ENCODE measurements at regions of chr2 and their contacts with region 1.

Region 1: DNA sequence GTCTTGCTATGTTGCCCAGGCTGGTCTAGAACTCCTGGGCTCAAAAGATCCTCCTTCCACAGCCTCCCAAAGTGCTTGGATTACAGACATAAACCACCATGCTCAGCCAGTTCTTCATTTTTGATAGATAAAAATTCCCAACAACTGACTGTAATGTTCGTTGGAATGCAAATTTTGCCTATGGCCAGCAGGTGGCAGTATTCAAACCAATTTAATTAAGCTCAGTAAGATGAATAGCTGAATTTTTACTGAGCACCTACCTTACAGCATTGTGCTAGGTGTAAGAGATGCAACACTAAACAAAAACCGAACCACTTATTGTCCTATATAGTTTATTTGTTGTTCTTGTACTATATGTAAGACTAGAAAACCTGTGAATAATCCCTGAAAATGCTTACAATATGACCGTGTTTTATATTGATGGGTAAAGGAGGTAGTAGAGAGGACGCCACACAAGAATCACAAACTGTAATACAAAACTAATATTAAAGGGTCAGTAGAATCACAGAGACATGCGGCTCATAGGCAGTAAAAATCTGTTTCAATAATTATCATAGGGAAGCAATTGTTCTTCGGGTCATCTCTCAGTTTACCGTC is 8.2 kb upstream of the TMEM182 start:
- DNase-seq: no peak
- H3K4me3 ChIP-seq: no peak overlapping the region
- H3K27ac ChIP-seq: no peak overlapping the region
- H3K4me1 ChIP-seq: 0 out of 7 replicates have a peak, but pooled peaks cover 0 to 2% (median 0%) of the 10 kb centered on the region in 4 experiments
- H3K27me3 ChIP-seq: no peaks in the 10 kb centered on the region
- CTCF ChIP-seq: peak in 2 of 3 experiments; percentile 48 to 62; a peak in 3 of 4 replicates
- EP300 ChIP-seq: no peak
- POLR2A ChIP-seq: no peak
- RAD21 ChIP-seq: peak; percentile 35 to 41; a peak in 3 of 4 replicates

Region 2: DNA sequence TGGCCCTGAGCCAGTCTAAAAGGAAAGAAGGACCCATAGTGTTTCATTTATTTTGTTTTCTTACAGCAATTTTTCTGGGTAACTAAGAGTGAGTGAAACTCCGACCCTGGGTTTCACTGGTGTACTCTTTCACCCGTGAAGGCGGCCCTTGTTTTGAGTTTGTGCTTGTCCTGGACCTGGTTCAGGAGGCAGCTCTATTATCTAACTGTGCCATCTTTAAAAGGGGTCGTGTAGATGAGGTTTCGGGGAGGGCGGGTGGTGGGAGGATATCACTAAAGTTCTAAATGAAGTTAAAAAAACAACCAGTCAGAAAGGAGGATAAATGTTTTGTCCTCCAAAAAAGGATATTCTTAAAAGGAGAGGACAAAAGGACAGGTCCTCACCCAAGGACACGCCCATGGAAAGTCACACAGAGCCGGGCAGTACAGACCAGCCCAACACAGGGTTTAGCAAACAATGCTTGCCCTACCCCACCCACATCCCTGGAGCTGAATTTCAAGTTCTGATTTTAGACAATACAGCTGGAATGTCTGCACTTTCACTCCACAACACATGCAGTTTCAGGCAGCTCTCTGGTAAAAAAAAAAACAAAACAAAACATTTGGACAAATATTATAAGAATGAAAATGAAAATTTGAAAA is 212.9 kb before region 1 on chr2:
- CTCF ChIA-PET with region 1: no interaction called
- POLR2A ChIA-PET with region 1: no interaction called
- DNase-seq: no peak
- H3K4me3 ChIP-seq: no peak overlapping the region
- H3K27ac ChIP-seq: no peak overlapping the region
- H3K4me1 ChIP-seq: no peaks in the 10 kb centered on the region
- H3K27me3 ChIP-seq: no peaks in the 10 kb centered on the region
- CTCF ChIP-seq: no peak
- EP300 ChIP-seq: no peak
- POLR2A ChIP-seq: no peak
- RAD21 ChIP-seq: no peak

Region 3: DNA sequence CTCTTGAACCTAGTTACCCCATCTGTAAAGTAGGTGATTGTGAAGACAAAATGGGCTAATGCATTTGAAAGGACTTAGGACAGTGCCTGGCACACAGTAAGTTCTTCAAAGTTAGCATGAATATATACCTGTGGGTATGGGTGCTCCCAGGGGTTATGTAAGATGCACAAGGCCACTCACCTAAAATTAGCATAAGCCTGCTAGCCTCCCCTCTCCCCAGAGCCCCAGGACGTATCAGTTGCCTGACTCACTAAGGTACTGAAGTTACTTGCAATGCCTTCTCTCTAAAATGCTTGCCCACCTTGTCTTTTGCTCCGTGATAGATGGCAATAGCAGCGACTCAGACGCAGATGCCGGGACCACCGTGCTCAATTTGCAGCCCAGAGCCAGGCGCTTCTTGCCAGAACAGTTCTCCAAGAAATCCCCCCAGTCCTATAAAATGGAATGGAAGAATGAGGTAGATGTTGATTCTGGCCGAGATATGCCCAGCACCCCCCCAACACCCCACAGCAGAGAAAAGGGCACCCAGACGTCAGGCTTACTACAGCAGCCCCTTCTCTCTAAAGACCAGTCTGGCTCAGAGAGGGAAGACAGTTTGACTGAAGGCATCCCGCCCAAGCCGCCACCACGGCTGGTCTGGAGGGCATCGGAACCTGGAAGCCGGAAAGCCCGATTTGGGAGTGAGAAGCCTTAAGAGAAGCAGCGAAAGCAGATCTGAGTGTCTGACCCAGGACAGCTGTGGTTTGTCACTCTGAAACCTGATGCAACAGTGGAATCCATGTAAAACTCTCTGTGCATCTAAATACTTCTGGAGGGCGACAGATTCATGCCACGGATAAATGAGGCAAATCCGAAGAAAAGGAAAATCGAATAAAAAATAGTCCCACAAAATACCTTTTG is 45.6 kb before region 1 on chr2:
- CTCF ChIA-PET with region 1: no interaction called
- POLR2A ChIA-PET with region 1: no interaction called
- DNase-seq: no peak
- H3K4me3 ChIP-seq: no peak overlapping the region
- H3K27ac ChIP-seq: no peak overlapping the region
- H3K4me1 ChIP-seq: peaks cover 0 to 2% (median under 1%) of the 10 kb centered on the region in 4 experiments; a peak in 3 of 7 replicates
- H3K27me3 ChIP-seq: no peaks in the 10 kb centered on the region
- CTCF ChIP-seq: no peak
- EP300 ChIP-seq: no peak
- POLR2A ChIP-seq: no peak
- RAD21 ChIP-seq: no peak

Region 4: GRCh38 chr2:102736410-102737409 is 17.0 kb before region 1 on chr2:
- CTCF ChIA-PET with region 1: interaction called, 30 read pairs
- POLR2A ChIA-PET with region 1: interaction called, 3 read pairs
- DNase-seq: peak; percentile 57 to 91
- H3K4me3 ChIP-seq: peak overlapping the region; percentile 83 to 98 (median 96)
- H3K27ac ChIP-seq: peak overlapping the region; percentile 53; the same call in 1 of the 2 replicates
- H3K4me1 ChIP-seq: peaks cover 0 to 9% (median 1%) of the 10 kb centered on the region in 4 experiments; a peak in 4 of 7 replicates
- H3K27me3 ChIP-seq: no peaks in the 10 kb centered on the region
- CTCF ChIP-seq: no peak
- EP300 ChIP-seq: no peak
- POLR2A ChIP-seq: peak in 1 of 2 experiments; percentile 62; a peak in 2 of 3 replicates
- RAD21 ChIP-seq: no peak

Region 5: GRCh38 chr2:102773149-102773705 is 19.6 kb after region 1 on chr2:
- CTCF ChIA-PET with region 1: interaction called, 16 read pairs
- POLR2A ChIA-PET with region 1: no interaction called
- DNase-seq: no peak
- H3K4me3 ChIP-seq: no peak overlapping the region
- H3K27ac ChIP-seq: no peak overlapping the region
- H3K4me1 ChIP-seq: no peaks in the 10 kb centered on the region
- H3K27me3 ChIP-seq: no peaks in the 10 kb centered on the region
- CTCF ChIP-seq: no peak
- EP300 ChIP-seq: no peak
- POLR2A ChIP-seq: no peak
- RAD21 ChIP-seq: no peak

Region 6: GRCh38 chr2:102782933-102783332 is 29.3 kb after region 1 on chr2:
- CTCF ChIA-PET with region 1: interaction called, 23 read pairs
- POLR2A ChIA-PET with region 1: no interaction called
- DNase-seq: no peak
- H3K4me3 ChIP-seq: no peak overlapping the region
- H3K27ac ChIP-seq: peak overlapping the region; percentile 14; the same call in 1 of the 2 replicates
- H3K4me1 ChIP-seq: peaks cover 0 to 3% (median 1%) of the 10 kb centered on the region in 4 experiments; a peak in 3 of 7 replicates
- H3K27me3 ChIP-seq: no peaks in the 10 kb centered on the region
- CTCF ChIP-seq: no peak
- EP300 ChIP-seq: no peak
- POLR2A ChIP-seq: no peak
- RAD21 ChIP-seq: no peak